ENCODE measurements at regions of chr7 and their contacts with region 1.

Region 1: GRCh38 chr7:110210941-110211608 is 879.9 kb upstream of the LRRN3 start:
- DNase-seq: no peak
- H3K4me3 ChIP-seq: no peak overlapping the region
- H3K27ac ChIP-seq: no peak overlapping the region
- H3K27me3 ChIP-seq: no peaks in the 10 kb centered on the region
- CTCF ChIP-seq: no peak

Region 2: GRCh38 chr7:111622082-111622481 is 1411.0 kb after region 1 on chr7:
- CTCF ChIA-PET with region 1: interaction called, 12 read pairs
- POLR2A ChIA-PET with region 1: no interaction called
- DNase-seq: no peak
- H3K4me3 ChIP-seq: no peak overlapping the region
- H3K27ac ChIP-seq: no peak overlapping the region
- H3K27me3 ChIP-seq: no peaks in the 10 kb centered on the region
- CTCF ChIP-seq: no peak

Measured in AG04450 (cell line).